Caco-2 (cell line): ENCODE measurements at regions of chr11 and their contacts with region 1.

Region 1: GRCh38 chr11:102666331-102666957 is 39.1 kb downstream of the MMP27 start:
- DNase-seq: peak; percentile 55 to 68
- H3K4me3 ChIP-seq: no peak overlapping the region
- H3K4me3 Mint-ChIP-seq: no peak overlapping the region
- H3K27ac Mint-ChIP-seq: no peak overlapping the region
- H3K4me1 ChIP-seq: 0 out of 2 replicates have a peak, but pooled peaks cover 5% of the 10 kb centered on the region
- H3K4me1 Mint-ChIP-seq: peaks cover 6% of the 10 kb centered on the region
- H3K27me3 ChIP-seq: no peaks in the 10 kb centered on the region
- H3K27me3 Mint-ChIP-seq: peaks cover 5% of the 10 kb centered on the region
- CTCF ChIP-seq: peak; percentile 98 to 99

Region 2: GRCh38 chr11:102287964-102288724 is 378.3 kb before region 1 on chr11:
- CTCF ChIA-PET with region 1: interaction called, 13 read pairs
- POLR2A ChIA-PET with region 1: no interaction called
- intact Hi-C with region 1: loop called (anchors 1 kb)
- DNase-seq: peak; percentile 66 to 78
- H3K4me3 ChIP-seq: no peak overlapping the region
- H3K4me3 Mint-ChIP-seq: peak overlapping the region; percentile 1
- H3K27ac Mint-ChIP-seq: no peak overlapping the region
- H3K4me1 ChIP-seq: peaks cover 12% of the 10 kb centered on the region
- H3K4me1 Mint-ChIP-seq: peaks cover 7% of the 10 kb centered on the region
- H3K27me3 ChIP-seq: no peaks in the 10 kb centered on the region
- H3K27me3 Mint-ChIP-seq: no peaks in the 10 kb centered on the region
- CTCF ChIP-seq: peak; percentile 84

Region 3: GRCh38 chr11:102367364-102367763 is 299.1 kb before region 1 on chr11:
- CTCF ChIA-PET with region 1: interaction called, 3 read pairs
- POLR2A ChIA-PET with region 1: no interaction called
- intact Hi-C with region 1: loop called (anchors 1 kb)
- DNase-seq: no peak
- H3K4me3 ChIP-seq: no peak overlapping the region
- H3K4me3 Mint-ChIP-seq: no peak overlapping the region
- H3K27ac Mint-ChIP-seq: no peak overlapping the region
- H3K4me1 ChIP-seq: no peaks in the 10 kb centered on the region
- H3K4me1 Mint-ChIP-seq: no peaks in the 10 kb centered on the region
- H3K27me3 ChIP-seq: no peaks in the 10 kb centered on the region
- H3K27me3 Mint-ChIP-seq: no peaks in the 10 kb centered on the region
- CTCF ChIP-seq: peak; percentile 25 to 46

Region 4: DNA sequence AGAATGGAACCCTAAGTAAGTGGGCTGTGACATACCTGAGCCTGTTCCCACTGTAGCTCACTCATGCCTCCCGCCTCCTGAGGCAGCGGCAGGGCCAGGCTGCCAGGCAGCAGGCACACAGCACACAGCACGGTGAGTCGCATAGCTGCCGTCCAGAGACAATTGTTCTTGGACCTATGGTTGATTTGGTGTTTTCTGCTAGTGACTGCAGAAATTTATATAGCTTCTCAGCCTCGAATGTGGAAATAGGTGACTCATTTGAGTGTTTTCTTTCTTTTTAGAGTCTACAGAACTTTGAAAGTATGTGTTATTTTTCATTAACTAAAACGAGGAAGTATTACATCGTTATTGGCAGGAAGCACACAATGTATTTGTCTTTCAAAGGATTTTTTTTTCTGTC is 135.9 kb before region 1 on chr11 and contains the start of gene MMP7:
- CTCF ChIA-PET with region 1: no interaction called
- POLR2A ChIA-PET with region 1: interaction called, 4 read pairs
- intact Hi-C with region 1: loop called (anchors 10 kb)
- DNase-seq: no peak
- H3K4me3 ChIP-seq: no peak within 1 kb of the TSS
- H3K4me3 Mint-ChIP-seq: no peak within 1 kb of the TSS
- H3K27ac Mint-ChIP-seq: no peak within 1 kb of the TSS
- H3K4me1 ChIP-seq: peaks cover 14% of the 10 kb centered on the region
- H3K4me1 Mint-ChIP-seq: peaks cover 14% of the 10 kb centered on the region
- H3K27me3 ChIP-seq: no peaks in the 10 kb centered on the region
- H3K27me3 Mint-ChIP-seq: no peaks in the 10 kb centered on the region
- CTCF ChIP-seq: no peak
- total RNA-seq, gene MMP7: 1.0 TPM in 1 of 2 replicates, not detected in the other

Region 5: DNA sequence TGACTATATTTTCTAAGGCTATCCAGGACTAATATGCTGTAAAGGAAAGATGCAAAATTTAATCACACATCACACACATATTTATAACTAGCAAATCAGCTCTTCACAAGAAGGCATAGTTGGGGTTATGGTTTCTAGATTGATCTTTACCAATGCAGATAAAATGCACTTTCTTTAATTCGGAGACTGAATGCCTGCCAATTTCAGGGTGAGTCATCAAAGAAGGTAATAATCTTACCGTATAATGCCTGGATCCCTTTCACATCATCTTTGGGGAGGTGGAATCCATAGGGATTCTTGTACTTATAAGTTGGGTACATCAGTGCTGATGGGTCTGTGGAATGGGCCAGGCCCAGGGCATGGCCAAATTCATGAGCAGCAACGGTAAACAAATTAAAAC is 57.7 kb before region 1 on chr11:
- CTCF ChIA-PET with region 1: interaction called, 38 read pairs
- POLR2A ChIA-PET with region 1: no interaction called
- intact Hi-C with region 1: loop called (anchors 1 kb)
- DNase-seq: no peak
- H3K4me3 ChIP-seq: no peak overlapping the region
- H3K4me3 Mint-ChIP-seq: no peak overlapping the region
- H3K27ac Mint-ChIP-seq: no peak overlapping the region
- H3K4me1 ChIP-seq: peaks cover 38% of the 10 kb centered on the region
- H3K4me1 Mint-ChIP-seq: peaks cover 22% of the 10 kb centered on the region
- H3K27me3 ChIP-seq: no peaks in the 10 kb centered on the region
- H3K27me3 Mint-ChIP-seq: no peaks in the 10 kb centered on the region
- CTCF ChIP-seq: no peak

Region 6: DNA sequence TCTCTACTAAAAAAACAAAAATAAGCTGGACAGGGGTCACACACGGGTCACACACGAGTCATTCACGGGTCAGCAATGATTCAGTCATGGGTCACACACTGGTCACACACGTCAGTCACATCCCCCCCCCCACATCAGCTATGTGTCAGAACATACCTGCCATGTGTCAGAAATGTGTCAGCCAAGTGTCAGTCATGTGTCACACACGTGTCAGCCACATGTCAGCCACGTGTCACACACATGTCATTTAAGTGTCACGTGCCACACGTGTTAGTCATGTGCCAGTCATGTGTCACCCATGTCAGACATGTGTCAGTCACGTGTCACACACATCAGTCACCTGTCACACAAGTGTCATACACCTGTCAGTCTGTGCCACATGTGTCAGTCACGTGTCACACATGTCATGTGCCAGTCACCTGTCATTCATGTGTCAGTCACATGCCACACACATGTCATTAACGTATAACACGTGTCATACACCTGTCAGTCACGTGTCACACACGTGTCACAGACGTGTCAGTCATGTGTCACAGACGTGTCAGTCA is 12.6 kb before region 1 on chr11:
- CTCF ChIA-PET with region 1: interaction called, 12 read pairs
- POLR2A ChIA-PET with region 1: no interaction called
- intact Hi-C with region 1: no loop called
- DNase-seq: no peak
- H3K4me3 ChIP-seq: no peak overlapping the region
- H3K4me3 Mint-ChIP-seq: no peak overlapping the region
- H3K27ac Mint-ChIP-seq: no peak overlapping the region
- H3K4me1 ChIP-seq: no peaks in the 10 kb centered on the region
- H3K4me1 Mint-ChIP-seq: no peaks in the 10 kb centered on the region
- H3K27me3 ChIP-seq: no peaks in the 10 kb centered on the region
- H3K27me3 Mint-ChIP-seq: peaks cover 8% of the 10 kb centered on the region
- CTCF ChIP-seq: no peak

Region 7: DNA sequence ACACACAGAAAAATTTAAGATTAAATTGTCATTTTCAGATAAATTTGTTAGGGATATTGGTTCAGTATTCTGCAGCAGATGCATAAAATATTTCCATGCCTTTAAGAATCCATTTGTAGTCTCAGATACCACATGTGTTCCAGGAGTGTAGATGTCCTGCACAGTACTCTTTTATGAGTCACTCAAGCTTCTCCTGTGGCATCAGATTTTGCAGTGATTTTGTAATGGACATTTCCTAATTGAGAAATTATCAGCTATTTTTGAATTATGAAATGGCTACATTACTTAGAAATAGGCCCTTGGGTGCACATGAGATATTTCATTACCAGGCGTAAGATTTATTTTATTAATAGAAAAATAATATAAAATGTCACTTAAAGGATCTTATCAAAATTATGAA is 158.1 kb after region 1 on chr11:
- CTCF ChIA-PET with region 1: no interaction called
- POLR2A ChIA-PET with region 1: no interaction called
- intact Hi-C with region 1: no loop called
- DNase-seq: no peak
- H3K4me3 ChIP-seq: no peak overlapping the region
- H3K4me3 Mint-ChIP-seq: no peak overlapping the region
- H3K27ac Mint-ChIP-seq: no peak overlapping the region
- H3K4me1 ChIP-seq: no peaks in the 10 kb centered on the region
- H3K4me1 Mint-ChIP-seq: no peaks in the 10 kb centered on the region
- H3K27me3 ChIP-seq: no peaks in the 10 kb centered on the region
- H3K27me3 Mint-ChIP-seq: no peaks in the 10 kb centered on the region
- CTCF ChIP-seq: no peak